ENCODE measurements at regions of chr10 and their contacts with region 1.

Region 1: DNA sequence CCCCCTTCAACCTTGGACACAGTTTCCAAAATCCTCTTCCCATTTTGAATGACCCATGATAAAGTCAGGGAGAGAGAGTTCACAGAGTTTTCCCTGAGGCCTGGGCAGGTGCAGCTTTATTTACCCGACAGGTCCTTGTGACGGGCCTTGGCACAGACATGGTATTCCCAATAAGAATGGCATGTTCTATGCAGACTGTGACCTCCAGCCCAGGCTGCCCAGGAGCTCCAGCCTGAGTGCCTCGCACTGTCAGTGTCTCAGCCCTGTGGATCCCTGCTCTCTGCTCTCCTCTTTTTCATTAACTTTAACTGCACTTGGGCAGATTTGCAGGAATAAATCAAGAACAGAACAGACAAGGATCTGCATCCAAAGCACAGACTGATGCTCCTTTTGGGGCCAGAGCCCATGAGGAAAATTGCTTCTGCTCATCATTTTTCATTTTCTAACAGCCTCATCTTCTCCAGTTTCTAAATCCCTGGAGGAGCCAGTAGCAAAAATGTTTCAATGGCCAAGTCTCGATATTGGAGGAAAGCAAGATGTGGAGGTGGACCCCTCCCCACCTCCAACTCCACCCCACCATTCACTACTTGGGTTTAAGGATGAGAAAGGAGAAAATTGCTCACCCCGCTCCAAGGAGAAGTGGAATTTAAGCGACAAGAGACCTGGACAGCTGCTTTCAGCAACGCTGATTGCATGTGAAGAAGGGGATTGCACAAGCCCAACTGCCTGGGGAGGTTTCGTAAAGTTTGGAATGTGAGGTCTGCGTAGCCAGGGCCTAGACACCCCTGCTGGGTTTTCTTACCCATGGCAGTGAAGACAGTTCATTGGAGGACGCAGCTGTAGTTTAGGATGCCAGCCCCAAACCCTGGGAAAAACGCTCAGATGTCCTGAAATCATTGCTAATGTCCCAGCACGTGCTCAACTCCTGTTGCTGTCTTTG is 225.9 kb downstream of the WDR11 start:
- DNase-seq: no peak
- H3K4me3 ChIP-seq: no peak overlapping the region
- H3K27ac ChIP-seq: peak overlapping the region; percentile 46 to 77 (median 64)
- H3K4me1 ChIP-seq: peaks cover 0 to 93% (median 76%) of the 10 kb centered on the region in 4 donors
- H3K27me3 ChIP-seq: no peaks in the 10 kb centered on the region
- CTCF ChIP-seq: no peak
- EP300 ChIP-seq: peak in 1 of 4 donors; percentile 44
- POLR2A ChIP-seq: no peak

Region 2: GRCh38 chr10:120948889-120949608 is 128.0 kb before region 1 on chr10:
- intact Hi-C with region 1: loop called (anchors 5 kb)
- DNase-seq: peak; percentile 82
- H3K4me3 ChIP-seq: peak overlapping the region; percentile 12 to 50 (median 38)
- H3K27ac ChIP-seq: peak overlapping the region in 1 of 4 donors; percentile 45
- H3K4me1 ChIP-seq: peaks cover 0 to 27% (median 23%) of the 10 kb centered on the region in 4 donors
- H3K27me3 ChIP-seq: peaks cover 0 to 12% (median 0%) of the 10 kb centered on the region in 3 donors
- CTCF ChIP-seq: peak; percentile 70 to 96 (median 83)
- EP300 ChIP-seq: no peak
- POLR2A ChIP-seq: no peak